Calu3 (cell line): ENCODE measurements at regions of chr13 and their contacts with region 1.

Region 1: DNA sequence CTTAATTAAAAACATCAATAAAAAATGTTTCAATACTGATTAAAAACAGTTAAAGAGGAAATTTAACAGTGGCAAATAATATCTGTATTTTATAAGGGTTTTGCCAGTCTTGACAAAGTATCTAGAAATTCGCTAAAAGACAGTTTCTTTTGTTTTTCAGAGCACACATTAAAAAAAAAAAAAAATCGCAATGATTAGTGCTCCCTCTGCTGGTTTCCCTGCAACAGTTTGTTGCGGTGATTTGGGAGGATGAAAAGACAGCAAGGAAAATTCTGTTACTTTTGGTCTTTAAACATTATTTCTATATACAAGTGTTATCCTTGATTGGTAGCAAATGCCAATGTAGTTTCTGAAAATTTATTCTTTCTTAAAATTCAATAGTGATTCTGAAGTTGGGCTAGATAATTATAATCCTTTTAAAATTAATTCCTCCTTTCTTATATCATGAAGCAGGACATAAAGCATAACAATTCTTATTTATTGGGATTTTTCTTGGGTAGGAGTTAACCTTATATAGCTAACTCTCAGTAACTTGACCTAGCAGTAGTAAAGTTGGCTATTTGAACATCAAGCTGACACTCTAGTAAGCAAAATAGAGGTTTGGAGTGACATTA is 23.1 kb upstream of the SPRY2 start:
- DNase-seq: no peak
- H3K4me3 Mint-ChIP-seq: no peak overlapping the region
- H3K27ac Mint-ChIP-seq: no peak overlapping the region
- H3K4me1 Mint-ChIP-seq: no peaks in the 10 kb centered on the region
- H3K27me3 Mint-ChIP-seq: no peaks in the 10 kb centered on the region
- CTCF ChIP-seq: no peak

Region 2: DNA sequence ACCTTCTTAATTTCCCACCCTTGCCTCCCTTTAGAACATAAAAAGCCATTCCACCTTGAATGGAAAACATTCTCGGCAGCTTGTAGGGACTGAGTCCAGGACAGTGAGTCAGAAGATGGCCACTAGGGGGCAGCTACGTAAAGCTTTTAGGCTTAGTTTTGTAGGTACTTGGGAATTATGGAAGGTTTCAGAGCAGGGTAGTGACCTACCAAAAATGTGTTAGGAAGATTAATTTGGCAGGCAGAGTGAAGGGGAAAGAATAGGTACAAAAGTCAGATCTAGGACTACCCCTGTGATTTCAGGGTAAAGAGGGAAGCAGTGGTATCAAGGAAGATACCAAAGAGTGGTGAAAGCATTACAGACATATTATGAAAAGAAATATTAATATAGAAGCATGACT is 684.7 kb before region 1 on chr13:
- CTCF ChIA-PET with region 1: no interaction called
- intact Hi-C with region 1: loop called (anchors 2 kb)
- DNase-seq: peak; percentile 48
- H3K4me3 Mint-ChIP-seq: no peak overlapping the region
- H3K27ac Mint-ChIP-seq: no peak overlapping the region
- H3K4me1 Mint-ChIP-seq: peaks cover 18% of the 10 kb centered on the region
- H3K27me3 Mint-ChIP-seq: no peaks in the 10 kb centered on the region
- CTCF ChIP-seq: peak; percentile 29

Region 3: DNA sequence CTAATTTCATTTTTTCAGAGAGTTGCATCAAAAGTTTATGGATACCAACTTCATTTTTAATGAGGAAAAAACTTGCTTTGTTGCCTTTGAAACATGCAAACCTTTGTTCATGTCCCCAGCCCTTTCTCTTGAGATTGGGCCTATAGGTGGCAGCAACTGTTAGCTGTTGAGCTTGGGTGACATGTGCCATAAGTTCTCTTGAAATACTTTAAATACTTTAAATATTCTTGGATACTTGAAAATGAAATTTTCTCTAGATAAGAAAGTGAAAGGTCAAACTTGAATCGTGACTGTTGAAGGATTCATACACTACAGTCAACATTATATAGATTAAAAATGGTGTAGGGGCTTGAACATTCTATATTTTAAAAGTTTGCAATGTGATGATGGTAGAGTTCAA is 588.2 kb before region 1 on chr13:
- CTCF ChIA-PET with region 1: no interaction called
- intact Hi-C with region 1: loop called (anchors 5 kb)
- DNase-seq: peak; percentile 12
- H3K4me3 Mint-ChIP-seq: no peak overlapping the region
- H3K27ac Mint-ChIP-seq: no peak overlapping the region
- H3K4me1 Mint-ChIP-seq: no peaks in the 10 kb centered on the region
- H3K27me3 Mint-ChIP-seq: no peaks in the 10 kb centered on the region
- CTCF ChIP-seq: no peak

Region 4: GRCh38 chr13:80342471-80343380 is 21.3 kb before region 1 on chr13:
- CTCF ChIA-PET with region 1: interaction called, 3 read pairs
- intact Hi-C with region 1: loop called (anchors 1 kb)
- DNase-seq: peak; percentile 73
- H3K4me3 Mint-ChIP-seq: no peak overlapping the region
- H3K27ac Mint-ChIP-seq: no peak overlapping the region
- H3K4me1 Mint-ChIP-seq: no peaks in the 10 kb centered on the region
- H3K27me3 Mint-ChIP-seq: no peaks in the 10 kb centered on the region
- CTCF ChIP-seq: peak; percentile 50

Region 5: DNA sequence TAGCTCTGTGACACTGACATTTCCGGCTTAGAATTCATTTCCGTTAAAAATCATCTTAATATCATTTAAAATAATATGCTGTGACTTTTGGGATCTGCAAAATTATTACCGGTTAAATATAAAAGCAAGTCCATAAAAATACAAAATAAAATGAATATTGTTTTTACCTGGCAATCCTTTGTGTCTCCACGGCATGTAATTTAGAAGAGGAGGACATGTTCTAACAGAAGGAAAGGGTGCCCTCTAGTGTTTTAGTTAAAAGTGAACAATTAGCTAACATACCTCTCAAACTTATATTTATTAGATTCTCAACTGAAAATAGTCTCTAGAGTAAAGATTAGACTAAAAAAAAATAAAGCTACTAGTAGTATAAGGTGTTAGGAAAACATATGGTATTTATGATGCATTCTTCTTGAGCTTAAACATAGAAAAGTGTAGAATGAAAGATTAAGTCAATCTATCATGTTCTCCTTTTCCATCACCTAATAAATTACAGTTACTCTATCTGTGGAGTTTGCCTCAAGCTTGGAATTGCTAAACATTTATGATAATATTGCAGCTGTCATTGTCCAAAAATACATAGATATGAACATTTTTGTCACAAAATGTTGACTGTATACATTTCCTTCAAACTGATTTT is 653.6 kb after region 1 on chr13:
- CTCF ChIA-PET with region 1: no interaction called
- intact Hi-C with region 1: loop called (anchors 5 kb)
- DNase-seq: no peak
- H3K4me3 Mint-ChIP-seq: no peak overlapping the region
- H3K27ac Mint-ChIP-seq: no peak overlapping the region
- H3K4me1 Mint-ChIP-seq: no peaks in the 10 kb centered on the region
- H3K27me3 Mint-ChIP-seq: no peaks in the 10 kb centered on the region
- CTCF ChIP-seq: no peak